CD4-positive, alpha-beta T cell (primary cell): ENCODE measurements at regions of chr19 and their contacts with region 1.

Region 1: DNA sequence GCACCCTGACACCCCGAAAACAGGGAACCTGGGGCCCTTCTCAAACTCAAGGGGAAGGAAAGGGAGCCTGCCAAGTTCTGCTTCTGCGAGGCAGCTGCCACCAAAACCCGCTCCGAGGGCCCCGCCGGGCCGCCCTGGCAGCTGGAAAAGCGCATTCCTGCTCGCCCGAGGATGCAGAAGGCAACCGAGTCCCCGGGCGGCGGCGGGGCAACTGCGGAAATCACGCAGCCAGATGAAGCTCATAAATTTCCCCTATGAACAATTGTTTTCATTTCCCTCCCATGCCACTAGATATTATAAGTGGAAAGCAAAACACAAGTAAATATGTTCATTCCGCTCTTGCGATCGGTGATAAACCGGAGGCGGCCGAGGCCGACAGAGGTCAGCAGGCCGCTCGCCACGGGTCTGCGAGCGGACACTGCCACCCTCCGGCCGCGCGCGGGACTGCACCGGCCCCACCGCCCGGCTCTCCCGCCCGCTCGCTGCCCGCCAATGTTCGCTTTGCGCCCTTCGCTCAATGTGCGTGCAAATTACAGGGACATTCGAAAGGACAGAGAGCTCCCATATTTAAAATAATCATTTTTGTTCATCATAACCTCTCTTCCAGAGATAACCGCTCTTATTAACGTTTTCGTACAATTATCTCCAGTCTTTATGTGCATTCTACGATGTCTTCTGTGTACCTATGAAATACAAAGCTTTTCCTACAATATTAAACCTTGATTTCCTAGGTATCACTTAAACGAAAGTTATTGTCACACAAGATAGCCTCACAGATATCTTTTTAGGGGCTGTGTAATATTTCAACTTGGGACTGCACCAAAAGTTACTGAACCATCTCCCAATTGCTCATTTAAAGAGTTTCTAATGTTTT is 120.8 kb upstream of the ZNF507 start:
- DNase-seq: peak in 13 of 14 experiments; percentile 28 to 75 (median 47)
- ATAC-seq: peak; percentile 63
- H3K4me3 ChIP-seq: peak overlapping the region; percentile 34
- H3K4me3 Mint-ChIP-seq: peak overlapping the region; percentile 82
- H3K27ac ChIP-seq: no peak overlapping the region
- H3K27ac Mint-ChIP-seq: no peak overlapping the region
- H3K4me1 ChIP-seq: peaks cover 15% of the 10 kb centered on the region
- H3K4me1 Mint-ChIP-seq: peaks cover 14% of the 10 kb centered on the region
- H3K27me3 ChIP-seq: peaks cover 30 to 53% of the 10 kb centered on the region in 2 experiments
- H3K27me3 Mint-ChIP-seq: peaks cover 69% of the 10 kb centered on the region
- CTCF ChIP-seq: peak; percentile 99

Region 2: DNA sequence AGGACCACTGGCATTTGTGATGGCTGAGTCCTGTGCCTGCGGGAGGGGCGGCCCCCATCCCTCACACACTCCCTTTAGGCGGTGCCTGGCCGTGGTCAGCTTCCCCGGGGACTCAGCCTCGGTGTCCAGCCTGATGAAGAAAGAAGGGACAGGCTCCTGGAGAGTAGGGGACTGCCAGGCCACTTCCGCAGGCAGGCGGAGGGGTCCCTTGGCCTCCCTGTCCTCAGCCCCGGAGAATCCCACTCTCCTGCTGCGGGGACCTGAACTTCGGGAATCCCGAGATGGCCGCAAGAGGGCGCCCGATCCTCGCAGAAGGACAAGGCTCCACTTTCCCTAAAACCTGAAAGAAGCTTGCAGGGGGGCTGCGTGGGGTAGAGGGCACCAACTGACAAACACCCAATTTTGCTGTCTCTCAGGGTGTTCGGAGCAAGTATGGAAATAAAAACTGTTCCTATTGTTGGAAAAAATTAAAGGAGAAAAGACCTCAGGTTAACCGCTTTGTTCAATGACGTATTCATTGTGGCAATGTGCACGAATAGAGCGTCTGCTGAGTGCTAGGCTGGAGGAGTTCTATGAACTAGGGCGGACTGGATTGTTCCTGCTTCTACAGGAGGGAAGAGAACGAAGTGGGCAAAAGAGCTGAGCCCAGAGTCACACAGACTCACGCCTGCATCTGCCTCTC is 1555.1 kb before region 1 on chr19:
- CTCF ChIA-PET with region 1: interaction called, 5 read pairs
- POLR2A ChIA-PET with region 1: no interaction called
- intact Hi-C with region 1: loop called (anchors 1 kb)
- DNase-seq: peak; percentile 15 to 56 (median 26)
- ATAC-seq: no peak
- H3K4me3 ChIP-seq: no peak overlapping the region
- H3K4me3 Mint-ChIP-seq: no peak overlapping the region
- H3K27ac ChIP-seq: no peak overlapping the region
- H3K27ac Mint-ChIP-seq: no peak overlapping the region
- H3K4me1 ChIP-seq: peaks cover 2% of the 10 kb centered on the region
- H3K4me1 Mint-ChIP-seq: no peaks in the 10 kb centered on the region
- H3K27me3 ChIP-seq: peaks cover 22% of the 10 kb centered on the region in 2 experiments
- H3K27me3 Mint-ChIP-seq: peaks cover 55% of the 10 kb centered on the region
- CTCF ChIP-seq: peak; percentile 68

Region 3: GRCh38 chr19:30682999-30683536 is 1541.5 kb before region 1 on chr19:
- CTCF ChIA-PET with region 1: interaction called, 4 read pairs
- POLR2A ChIA-PET with region 1: no interaction called
- intact Hi-C with region 1: loop called (anchors 1 kb)
- DNase-seq: peak; percentile 17 to 62 (median 30)
- ATAC-seq: peak; percentile 46
- H3K4me3 ChIP-seq: no peak overlapping the region
- H3K4me3 Mint-ChIP-seq: no peak overlapping the region
- H3K27ac ChIP-seq: no peak overlapping the region
- H3K27ac Mint-ChIP-seq: no peak overlapping the region
- H3K4me1 ChIP-seq: no peaks in the 10 kb centered on the region
- H3K4me1 Mint-ChIP-seq: no peaks in the 10 kb centered on the region
- H3K27me3 ChIP-seq: peaks cover 2 to 14% of the 10 kb centered on the region in 2 experiments
- H3K27me3 Mint-ChIP-seq: peaks cover 50% of the 10 kb centered on the region
- CTCF ChIP-seq: peak; percentile 82

Region 4: DNA sequence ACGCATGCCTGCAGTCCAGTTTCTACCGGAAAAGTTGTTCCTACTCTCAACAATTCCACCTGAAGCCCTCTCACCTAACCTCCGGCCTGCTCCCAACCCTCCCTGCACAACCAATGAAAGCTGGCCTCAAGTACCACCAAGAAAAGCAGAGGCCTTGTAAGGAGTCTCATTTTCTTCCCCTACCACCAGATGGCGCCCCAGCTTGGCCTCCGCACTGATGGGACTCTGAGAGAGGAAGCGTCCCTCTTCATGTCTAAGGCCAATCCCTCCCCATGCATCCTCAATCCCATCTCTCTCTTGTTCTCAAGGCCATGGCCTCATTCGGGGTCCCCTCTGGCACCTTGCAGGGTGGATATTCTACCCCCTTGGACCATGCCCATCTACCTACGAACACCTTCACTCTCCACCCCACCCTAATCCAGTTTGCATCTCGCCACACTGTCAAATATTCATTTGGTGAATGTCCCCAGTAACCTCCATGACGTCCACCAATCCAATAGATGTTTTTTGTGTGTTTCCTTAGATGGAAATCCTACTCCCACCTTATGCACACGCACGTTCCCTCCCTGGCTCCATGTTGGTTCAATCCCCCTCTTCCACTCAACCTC is 1439.7 kb before region 1 on chr19:
- CTCF ChIA-PET with region 1: interaction called, 5 read pairs
- POLR2A ChIA-PET with region 1: no interaction called
- intact Hi-C with region 1: loop called (anchors 1 kb)
- DNase-seq: peak; percentile 26 to 72 (median 48)
- ATAC-seq: no peak
- H3K4me3 ChIP-seq: no peak overlapping the region
- H3K4me3 Mint-ChIP-seq: no peak overlapping the region
- H3K27ac ChIP-seq: no peak overlapping the region
- H3K27ac Mint-ChIP-seq: no peak overlapping the region
- H3K4me1 ChIP-seq: no peaks in the 10 kb centered on the region
- H3K4me1 Mint-ChIP-seq: no peaks in the 10 kb centered on the region
- H3K27me3 ChIP-seq: no peaks in the 10 kb centered on the region
- H3K27me3 Mint-ChIP-seq: peaks cover 31% of the 10 kb centered on the region
- CTCF ChIP-seq: peak; percentile 63

Region 5: GRCh38 chr19:31054430-31054829 is 1170.2 kb before region 1 on chr19:
- CTCF ChIA-PET with region 1: interaction called, 4 read pairs
- POLR2A ChIA-PET with region 1: no interaction called
- intact Hi-C with region 1: loop called (anchors 1 to 10 kb)
- DNase-seq: peak in 12 of 14 experiments; percentile 1 to 64 (median 13)
- ATAC-seq: no peak
- H3K4me3 ChIP-seq: no peak overlapping the region
- H3K4me3 Mint-ChIP-seq: no peak overlapping the region
- H3K27ac ChIP-seq: no peak overlapping the region
- H3K27ac Mint-ChIP-seq: no peak overlapping the region
- H3K4me1 ChIP-seq: no peaks in the 10 kb centered on the region
- H3K4me1 Mint-ChIP-seq: no peaks in the 10 kb centered on the region
- H3K27me3 ChIP-seq: peaks cover 0 to 3% of the 10 kb centered on the region in 2 experiments
- H3K27me3 Mint-ChIP-seq: peaks cover 25% of the 10 kb centered on the region
- CTCF ChIP-seq: no peak

Region 6: GRCh38 chr19:31349160-31349881 is 875.3 kb before region 1 on chr19 and contains the start of gene TSHZ3:
- CTCF ChIA-PET with region 1: no interaction called
- POLR2A ChIA-PET with region 1: no interaction called
- intact Hi-C with region 1: loop called in 1 of 2 experiments (anchors 10 kb)
- DNase-seq: peak in 9 of 14 experiments; percentile 13 to 72 (median 43)
- ATAC-seq: peak; percentile 50
- H3K4me3 ChIP-seq: peak within 1 kb of the TSS; percentile 63
- H3K4me3 Mint-ChIP-seq: peak within 1 kb of the TSS; percentile 90
- H3K27ac ChIP-seq: no peak within 1 kb of the TSS
- H3K27ac Mint-ChIP-seq: no peak within 1 kb of the TSS
- H3K4me1 ChIP-seq: peaks cover 50% of the 10 kb centered on the region
- H3K4me1 Mint-ChIP-seq: peaks cover 41% of the 10 kb centered on the region
- H3K27me3 ChIP-seq: peaks cover 67 to 82% of the 10 kb centered on the region in 2 experiments
- H3K27me3 Mint-ChIP-seq: peaks cover 74% of the 10 kb centered on the region
- CTCF ChIP-seq: no peak
- total RNA-seq, gene TSHZ3: 0.38 to 0.61 TPM